ENCODE measurements at regions of chr11 and their contacts with region 1.

Region 1: GRCh38 chr11:43852057-43852636 is 28.5 kb upstream of the ALKBH3 start:
- DNase-seq: peak; percentile 62
- H3K4me3 Mint-ChIP-seq: no peak overlapping the region
- H3K27ac Mint-ChIP-seq: no peak overlapping the region
- H3K4me1 Mint-ChIP-seq: no peaks in the 10 kb centered on the region
- H3K27me3 Mint-ChIP-seq: no peaks in the 10 kb centered on the region
- CTCF ChIP-seq: peak; percentile 57

Region 2: DNA sequence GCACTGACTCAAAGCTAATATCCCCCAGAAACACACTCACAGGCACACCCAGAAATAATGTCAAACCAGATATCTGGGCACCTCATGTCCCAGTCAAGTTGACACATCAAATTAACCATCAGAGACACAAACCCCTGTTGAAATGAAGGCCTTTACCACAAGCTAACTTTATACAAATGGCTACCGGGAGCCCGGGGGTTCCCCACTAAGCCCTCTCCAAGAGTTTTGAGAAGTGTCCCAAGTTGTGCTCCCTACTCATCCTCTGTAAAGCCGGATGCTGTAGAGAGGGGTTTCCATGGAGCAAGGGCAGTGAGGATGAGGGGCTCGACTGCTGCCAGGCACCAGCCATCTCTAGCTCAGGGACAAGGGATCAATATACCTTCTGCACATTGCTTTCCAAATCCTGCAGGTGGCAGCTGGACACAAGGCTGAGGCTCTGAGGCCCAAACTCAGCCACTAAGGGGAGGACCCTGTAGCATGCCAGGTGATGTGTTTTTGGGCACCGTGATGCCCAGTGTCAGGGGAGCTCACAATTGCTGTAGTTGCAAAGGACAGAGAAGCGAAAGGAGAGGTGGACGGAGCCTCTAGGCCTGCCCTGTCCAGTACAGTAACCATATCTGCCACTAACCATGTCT is 347.7 kb before region 1 on chr11:
- CTCF ChIA-PET with region 1: interaction called, 12 read pairs
- intact Hi-C with region 1: loop called (anchors 2 kb)
- DNase-seq: peak; percentile 32
- H3K4me3 Mint-ChIP-seq: no peak overlapping the region
- H3K27ac Mint-ChIP-seq: no peak overlapping the region
- H3K4me1 Mint-ChIP-seq: no peaks in the 10 kb centered on the region
- H3K27me3 Mint-ChIP-seq: peaks cover 52% of the 10 kb centered on the region
- CTCF ChIP-seq: no peak

Region 3: GRCh38 chr11:43567396-43567975 is 284.7 kb before region 1 on chr11:
- CTCF ChIA-PET with region 1: no interaction called
- intact Hi-C with region 1: loop called (anchors 5 kb)
- DNase-seq: no peak
- H3K4me3 Mint-ChIP-seq: no peak overlapping the region
- H3K27ac Mint-ChIP-seq: no peak overlapping the region
- H3K4me1 Mint-ChIP-seq: no peaks in the 10 kb centered on the region
- H3K27me3 Mint-ChIP-seq: peaks cover 85% of the 10 kb centered on the region
- CTCF ChIP-seq: peak; percentile 65

Region 4: DNA sequence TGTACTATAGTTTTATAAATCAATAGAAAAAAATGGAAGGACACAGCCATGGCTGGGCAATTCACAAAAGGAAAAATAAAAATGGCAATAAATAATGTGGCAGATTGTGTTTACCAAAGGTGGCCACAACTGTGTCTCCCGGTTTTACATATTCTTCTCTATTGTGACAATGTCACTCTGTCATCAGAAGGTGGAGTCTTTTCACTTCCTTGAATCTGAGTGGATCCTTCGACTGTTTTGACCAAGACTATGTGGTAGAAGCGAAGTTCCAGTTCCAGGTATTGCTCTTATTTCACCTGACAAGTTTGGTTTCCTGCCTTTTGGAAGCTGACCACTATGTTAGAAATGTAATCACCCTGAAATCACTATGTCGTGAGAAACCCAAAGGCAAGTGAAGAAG is 202.6 kb before region 1 on chr11:
- CTCF ChIA-PET with region 1: no interaction called
- intact Hi-C with region 1: loop called (anchors 2 kb)
- DNase-seq: no peak
- H3K4me3 Mint-ChIP-seq: no peak overlapping the region
- H3K27ac Mint-ChIP-seq: no peak overlapping the region
- H3K4me1 Mint-ChIP-seq: no peaks in the 10 kb centered on the region
- H3K27me3 Mint-ChIP-seq: no peaks in the 10 kb centered on the region
- CTCF ChIP-seq: no peak

Region 5: DNA sequence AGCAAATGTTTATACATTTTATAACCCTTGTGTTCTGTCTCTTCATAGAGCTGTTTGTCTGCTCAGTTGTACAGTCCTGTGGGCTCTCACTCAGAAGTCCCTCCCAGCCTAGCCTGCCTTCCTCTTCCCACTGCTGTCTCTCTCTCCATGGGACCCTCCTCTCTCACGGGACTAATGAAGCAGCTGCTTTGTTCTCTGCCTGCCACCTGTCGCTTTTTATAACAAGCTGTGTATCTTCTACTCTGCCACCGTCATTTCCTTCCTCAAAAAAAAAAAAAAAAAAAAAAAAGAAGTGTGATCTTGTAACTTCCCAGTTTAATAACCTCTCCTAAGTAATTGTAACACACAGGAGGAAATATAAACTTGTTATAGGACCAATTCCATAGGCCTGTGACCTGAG is 63.7 kb before region 1 on chr11:
- CTCF ChIA-PET with region 1: no interaction called
- intact Hi-C with region 1: no loop called
- DNase-seq: no peak
- H3K4me3 Mint-ChIP-seq: no peak overlapping the region
- H3K27ac Mint-ChIP-seq: peak overlapping the region; percentile 48
- H3K4me1 Mint-ChIP-seq: no peaks in the 10 kb centered on the region
- H3K27me3 Mint-ChIP-seq: no peaks in the 10 kb centered on the region
- CTCF ChIP-seq: no peak

Region 6: GRCh38 chr11:43825217-43825816 is 26.8 kb before region 1 on chr11:
- CTCF ChIA-PET with region 1: interaction called, 18 read pairs
- intact Hi-C with region 1: no loop called
- DNase-seq: peak; percentile 43
- H3K4me3 Mint-ChIP-seq: no peak overlapping the region
- H3K27ac Mint-ChIP-seq: no peak overlapping the region
- H3K4me1 Mint-ChIP-seq: peaks cover 2% of the 10 kb centered on the region
- H3K27me3 Mint-ChIP-seq: no peaks in the 10 kb centered on the region
- CTCF ChIP-seq: peak; percentile 73

Region 7: DNA sequence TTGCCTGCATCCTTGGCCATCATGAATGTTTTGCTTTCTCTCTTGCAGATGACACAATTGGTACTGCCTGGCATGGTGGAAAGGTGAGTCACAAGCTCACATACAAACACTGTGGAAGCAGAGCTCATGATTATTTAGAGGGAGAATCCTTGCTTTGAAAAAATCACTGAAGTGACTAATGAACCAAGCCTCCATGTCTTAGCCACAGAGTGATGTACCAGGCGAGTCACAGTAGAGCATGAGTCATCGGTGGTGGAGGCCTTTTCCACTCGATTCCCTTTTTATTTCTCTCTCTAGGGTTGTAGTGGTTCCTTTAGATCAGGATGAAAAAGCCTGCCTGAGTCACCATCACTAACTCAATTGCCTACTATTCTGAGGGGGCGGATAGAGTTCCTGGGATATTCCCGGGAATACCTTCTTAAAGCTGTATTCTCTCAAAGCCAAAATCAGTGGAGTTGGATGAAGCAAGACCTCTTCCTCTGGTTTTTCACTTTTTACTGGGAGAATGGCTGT is 21.2 kb before region 1 on chr11:
- CTCF ChIA-PET with region 1: interaction called, 18 read pairs
- intact Hi-C with region 1: no loop called
- DNase-seq: peak; percentile 56
- H3K4me3 Mint-ChIP-seq: no peak overlapping the region
- H3K27ac Mint-ChIP-seq: peak overlapping the region; percentile 56
- H3K4me1 Mint-ChIP-seq: peaks cover 12% of the 10 kb centered on the region
- H3K27me3 Mint-ChIP-seq: no peaks in the 10 kb centered on the region
- CTCF ChIP-seq: no peak

Region 8: DNA sequence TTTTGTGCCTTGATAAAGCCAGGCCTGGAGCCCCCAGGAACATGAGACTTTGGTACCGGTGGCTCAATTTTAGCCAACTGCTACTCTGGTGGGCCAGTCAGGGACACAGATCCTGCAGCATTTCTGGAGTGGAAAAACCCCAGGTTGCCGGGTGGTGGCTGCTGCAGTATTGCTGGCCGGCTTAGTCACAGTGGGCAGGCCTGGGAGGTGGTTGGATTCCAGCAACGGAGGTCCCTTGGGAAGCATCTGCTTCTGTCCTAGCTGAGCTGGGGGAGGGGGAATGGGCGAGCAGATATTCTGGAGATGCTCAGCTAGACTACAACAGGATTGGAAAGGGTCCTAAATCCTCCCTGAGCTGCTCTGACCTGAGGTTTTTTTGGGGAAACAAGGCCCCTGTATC is 164.0 kb after region 1 on chr11:
- CTCF ChIA-PET with region 1: no interaction called
- intact Hi-C with region 1: no loop called
- DNase-seq: no peak
- H3K4me3 Mint-ChIP-seq: no peak overlapping the region
- H3K27ac Mint-ChIP-seq: no peak overlapping the region
- H3K4me1 Mint-ChIP-seq: no peaks in the 10 kb centered on the region
- H3K27me3 Mint-ChIP-seq: peaks cover 62% of the 10 kb centered on the region
- CTCF ChIP-seq: no peak

Measured in Calu3 (cell line).